Activated CD8-positive, alpha-beta T cell treated with anti-CD3 and anti-CD28 coated beads for 36 hours (primary cell): ENCODE measurements at regions of chr1 and their contacts with region 1.

Region 1: DNA sequence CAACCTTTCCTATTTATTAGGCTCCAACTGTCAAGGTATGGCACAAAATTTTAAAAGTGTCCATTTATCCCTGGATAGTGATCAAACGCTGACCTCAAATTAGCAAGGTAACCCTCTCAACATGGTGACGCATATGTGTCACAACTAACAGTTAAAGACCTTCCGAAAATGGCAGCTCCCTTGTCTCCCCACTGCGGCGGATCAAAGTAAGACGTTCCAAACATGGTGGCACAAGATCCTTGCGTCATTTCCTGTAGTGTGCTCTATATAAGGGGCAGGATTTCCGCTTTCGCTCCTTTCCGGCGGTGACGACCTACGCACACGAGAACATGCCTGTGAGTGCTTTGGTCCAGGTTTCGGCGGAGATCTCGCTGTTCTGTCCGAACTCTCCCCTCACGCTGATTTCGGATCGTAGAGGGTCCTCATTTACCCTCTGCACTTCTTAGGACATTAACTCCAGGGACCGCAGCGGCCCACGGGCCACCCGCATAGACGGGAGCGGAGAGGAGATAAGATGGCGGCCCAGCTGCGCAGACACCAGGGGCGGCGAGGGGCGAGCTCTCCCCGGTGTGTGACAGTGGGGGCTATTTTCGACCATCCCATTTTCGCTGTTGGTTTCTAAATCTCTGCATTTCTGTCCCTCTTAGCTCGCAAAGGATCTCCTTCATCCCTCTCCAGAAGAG is at the start of gene RPS27:
- DNase-seq: peak; percentile 93
- ATAC-seq: peak; percentile 85
- H3K4me3 Mint-ChIP-seq: peak within 1 kb of the TSS; percentile 95
- H3K27ac Mint-ChIP-seq: peak within 1 kb of the TSS; percentile 98
- H3K4me1 Mint-ChIP-seq: peaks cover 28% of the 10 kb centered on the region
- H3K27me3 Mint-ChIP-seq: no peaks in the 10 kb centered on the region
- CTCF ChIP-seq: no peak
- total RNA-seq, gene RPS27: 1,638 to 1,644 TPM

Region 2: GRCh38 chr1:153670859-153671627 is 319.6 kb before region 1 on chr1 and contains the start of gene ILF2:
- CTCF ChIA-PET with region 1: interaction called, 11 read pairs
- POLR2A ChIA-PET with region 1: interaction called, 5 read pairs
- intact Hi-C with region 1: loop called (anchors 5 kb)
- DNase-seq: peak; percentile 99
- ATAC-seq: peak; percentile 90
- H3K4me3 Mint-ChIP-seq: no peak within 1 kb of the TSS
- H3K27ac Mint-ChIP-seq: no peak within 1 kb of the TSS
- H3K4me1 Mint-ChIP-seq: peaks cover 26% of the 10 kb centered on the region
- H3K27me3 Mint-ChIP-seq: no peaks in the 10 kb centered on the region
- CTCF ChIP-seq: no peak
- total RNA-seq, gene ILF2: 328 to 333 TPM

Region 3: DNA sequence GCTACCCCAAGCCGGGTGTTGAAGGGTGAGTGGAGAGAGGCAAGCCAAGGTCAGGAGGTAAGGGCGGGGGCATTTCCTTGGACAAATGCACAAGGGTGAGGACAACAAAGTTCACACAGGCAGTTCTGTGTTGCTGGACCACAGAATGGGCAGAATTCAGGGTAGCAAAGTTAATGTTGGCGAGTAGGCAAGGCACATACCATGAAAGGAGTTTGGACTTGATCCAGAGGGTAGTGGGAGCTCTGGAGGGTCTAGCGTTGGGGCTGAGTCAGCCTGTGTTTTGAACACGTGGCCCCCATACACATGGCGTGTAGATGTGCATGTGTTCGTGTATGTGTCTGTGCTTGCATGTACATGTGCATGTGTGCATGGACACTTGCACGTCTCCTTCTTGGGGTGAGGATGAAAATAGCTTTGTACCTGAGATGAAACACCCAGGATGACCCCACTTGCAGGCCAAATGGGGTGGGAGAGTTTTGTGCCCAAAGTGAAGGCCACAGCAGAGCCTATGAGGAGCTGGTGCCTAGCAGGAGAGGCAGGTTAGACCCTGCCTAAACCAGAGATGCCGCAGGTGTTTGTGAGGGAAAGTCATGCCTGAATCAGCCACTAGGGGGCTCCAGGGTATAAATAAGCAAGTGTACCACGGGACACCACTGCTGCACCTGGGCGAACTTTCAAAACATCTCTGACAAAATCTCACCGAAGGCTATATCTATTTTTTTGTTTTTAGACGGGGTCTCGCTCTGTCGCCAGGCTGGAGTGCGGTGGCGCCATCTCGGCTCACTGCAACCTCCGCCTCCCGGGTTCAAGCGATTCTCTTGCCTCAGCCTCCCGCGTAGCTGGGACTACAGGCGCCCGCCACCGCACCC is 193.6 kb before region 1 on chr1:
- CTCF ChIA-PET with region 1: interaction called, 37 read pairs
- POLR2A ChIA-PET with region 1: interaction called, 35 read pairs
- intact Hi-C with region 1: loop called (anchors 2 kb)
- DNase-seq: peak; percentile 97
- ATAC-seq: peak; percentile 90
- H3K4me3 Mint-ChIP-seq: no peak overlapping the region
- H3K27ac Mint-ChIP-seq: no peak overlapping the region
- H3K4me1 Mint-ChIP-seq: peaks cover 11% of the 10 kb centered on the region
- H3K27me3 Mint-ChIP-seq: no peaks in the 10 kb centered on the region
- CTCF ChIP-seq: peak; percentile 83

Region 4: DNA sequence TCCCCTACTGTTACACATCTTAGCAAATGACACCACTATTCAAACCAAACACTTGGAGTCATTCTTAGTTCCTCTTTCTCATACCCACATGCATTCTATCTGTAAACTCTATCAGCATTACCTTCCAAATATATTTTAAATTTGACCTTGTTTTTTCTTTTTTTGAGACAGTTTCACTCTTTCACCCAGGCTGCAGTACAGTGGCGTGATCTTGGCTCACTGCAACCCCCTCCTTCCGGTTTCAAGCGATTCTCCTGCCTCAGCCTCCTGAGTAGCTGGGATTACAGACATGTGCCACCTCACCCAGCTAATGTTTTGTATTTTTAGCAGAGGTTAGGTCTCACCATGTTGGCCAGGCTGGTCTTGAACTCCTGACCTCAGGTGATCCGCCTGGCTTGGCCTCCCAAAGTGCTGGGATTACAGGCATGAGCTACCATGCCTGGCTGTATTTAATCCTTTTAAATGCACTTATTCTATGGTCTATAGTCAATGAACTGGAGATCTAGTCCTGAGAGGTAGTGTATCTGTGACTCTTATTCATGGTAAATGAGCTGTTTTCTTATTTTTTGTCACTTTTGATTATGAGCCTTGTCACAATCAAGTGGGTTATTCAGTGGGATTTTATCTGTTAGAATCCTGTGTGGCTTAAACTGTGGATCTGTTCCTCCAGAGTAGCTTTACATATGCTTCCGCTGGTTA is 141.0 kb before region 1 on chr1:
- CTCF ChIA-PET with region 1: interaction called, 11 read pairs
- POLR2A ChIA-PET with region 1: interaction called, 4 read pairs
- intact Hi-C with region 1: no loop called
- DNase-seq: peak; percentile 61
- ATAC-seq: peak; percentile 83
- H3K4me3 Mint-ChIP-seq: peak overlapping the region; percentile 20
- H3K27ac Mint-ChIP-seq: peak overlapping the region; percentile 92
- H3K4me1 Mint-ChIP-seq: peaks cover 42% of the 10 kb centered on the region
- H3K27me3 Mint-ChIP-seq: no peaks in the 10 kb centered on the region
- CTCF ChIP-seq: no peak

Region 5: DNA sequence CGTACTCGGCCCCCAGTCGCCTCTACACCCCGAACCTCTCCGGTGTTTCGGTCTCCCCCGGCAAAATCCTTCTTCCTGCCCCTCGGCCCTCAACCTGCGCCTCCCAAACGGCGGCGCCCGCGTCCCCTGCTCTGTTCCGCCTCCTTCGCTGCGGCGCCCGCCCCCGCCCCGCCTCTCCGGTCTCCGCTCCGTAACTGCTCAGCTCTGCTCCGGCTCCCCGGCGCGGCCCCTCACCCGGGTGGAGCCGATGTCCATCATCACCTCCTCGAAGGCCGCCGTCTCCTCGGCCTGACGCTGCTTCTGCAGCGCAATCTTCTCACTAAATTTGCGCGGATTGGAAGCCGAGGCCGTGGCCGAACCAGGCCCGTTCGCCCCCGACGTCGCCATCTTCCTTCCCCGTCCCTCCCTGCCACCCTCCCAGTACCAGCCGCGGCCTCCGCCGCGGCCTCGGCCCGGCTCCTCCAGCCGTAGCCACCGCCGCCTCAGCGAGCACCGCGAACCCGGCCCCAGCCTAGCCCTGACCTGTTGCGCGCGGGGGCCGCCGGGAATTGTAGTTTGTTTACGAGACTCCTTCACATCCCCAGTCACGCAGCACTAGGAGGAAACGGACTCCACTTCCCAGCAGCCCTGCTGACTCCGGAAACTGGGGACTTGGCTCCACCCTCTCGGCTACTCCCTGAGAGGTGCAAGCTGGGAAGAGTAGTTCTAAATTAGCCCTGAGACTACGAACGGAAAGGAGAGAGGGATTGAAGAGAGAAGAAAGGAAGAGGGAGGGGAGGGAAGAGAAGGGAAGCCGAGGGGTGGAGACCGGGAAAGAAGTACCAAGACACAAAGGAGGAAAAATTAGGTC is 32.3 kb before region 1 on chr1 and contains the start of gene CRTC2:
- CTCF ChIA-PET with region 1: interaction called, 22 read pairs
- POLR2A ChIA-PET with region 1: interaction called, 20 read pairs
- intact Hi-C with region 1: loop called (anchors 2 kb)
- DNase-seq: peak; percentile 100
- ATAC-seq: peak; percentile 88
- H3K4me3 Mint-ChIP-seq: peak within 1 kb of the TSS; percentile 97
- H3K27ac Mint-ChIP-seq: peak within 1 kb of the TSS; percentile 98
- H3K4me1 Mint-ChIP-seq: peaks cover 59% of the 10 kb centered on the region
- H3K27me3 Mint-ChIP-seq: no peaks in the 10 kb centered on the region
- CTCF ChIP-seq: no peak
- total RNA-seq, gene CRTC2: 67.3 to 71.8 TPM

Region 6: GRCh38 chr1:154157520-154158306 is 167.1 kb after region 1 on chr1:
- CTCF ChIA-PET with region 1: interaction called, 5 read pairs
- POLR2A ChIA-PET with region 1: interaction called, 17 read pairs
- intact Hi-C with region 1: loop called (anchors 10 kb)
- DNase-seq: peak; percentile 87
- ATAC-seq: peak; percentile 95
- H3K4me3 Mint-ChIP-seq: peak overlapping the region; percentile 61
- H3K27ac Mint-ChIP-seq: peak overlapping the region; percentile 96
- H3K4me1 Mint-ChIP-seq: peaks cover 74% of the 10 kb centered on the region
- H3K27me3 Mint-ChIP-seq: no peaks in the 10 kb centered on the region
- CTCF ChIP-seq: no peak